ENCODE measurements at regions of chr5 and their contacts with region 1.

Region 1: GRCh38 chr5:100566382-100567141 is 31.4 kb downstream of the FAM174A start:
- DNase-seq: no peak
- H3K4me3 Mint-ChIP-seq: peak overlapping the region; percentile 43
- H3K27ac Mint-ChIP-seq: no peak overlapping the region
- H3K4me1 Mint-ChIP-seq: peaks cover 17% of the 10 kb centered on the region
- H3K27me3 Mint-ChIP-seq: no peaks in the 10 kb centered on the region

Region 2: GRCh38 chr5:100535060-100536005 is 31.2 kb before region 1 on chr5 and contains the start of gene FAM174A:
- CTCF ChIA-PET with region 1: no interaction called
- POLR2A ChIA-PET with region 1: no interaction called
- intact Hi-C with region 1: loop called (anchors 2 kb)
- DNase-seq: peak; percentile 96
- H3K4me3 Mint-ChIP-seq: peak within 1 kb of the TSS; percentile 98
- H3K27ac Mint-ChIP-seq: peak within 1 kb of the TSS; percentile 87
- H3K4me1 Mint-ChIP-seq: peaks cover 22% of the 10 kb centered on the region
- H3K27me3 Mint-ChIP-seq: no peaks in the 10 kb centered on the region
- total RNA-seq, gene FAM174A: 5.8 to 8.3 TPM

Measured in activated CD4-positive, alpha-beta memory T cell treated with anti-CD3 and anti-CD28 coated beads for 36 hours (primary cell).